HepG2 (cell line): ENCODE measurements at regions of chr10 and their contacts with region 1.

Region 1: DNA sequence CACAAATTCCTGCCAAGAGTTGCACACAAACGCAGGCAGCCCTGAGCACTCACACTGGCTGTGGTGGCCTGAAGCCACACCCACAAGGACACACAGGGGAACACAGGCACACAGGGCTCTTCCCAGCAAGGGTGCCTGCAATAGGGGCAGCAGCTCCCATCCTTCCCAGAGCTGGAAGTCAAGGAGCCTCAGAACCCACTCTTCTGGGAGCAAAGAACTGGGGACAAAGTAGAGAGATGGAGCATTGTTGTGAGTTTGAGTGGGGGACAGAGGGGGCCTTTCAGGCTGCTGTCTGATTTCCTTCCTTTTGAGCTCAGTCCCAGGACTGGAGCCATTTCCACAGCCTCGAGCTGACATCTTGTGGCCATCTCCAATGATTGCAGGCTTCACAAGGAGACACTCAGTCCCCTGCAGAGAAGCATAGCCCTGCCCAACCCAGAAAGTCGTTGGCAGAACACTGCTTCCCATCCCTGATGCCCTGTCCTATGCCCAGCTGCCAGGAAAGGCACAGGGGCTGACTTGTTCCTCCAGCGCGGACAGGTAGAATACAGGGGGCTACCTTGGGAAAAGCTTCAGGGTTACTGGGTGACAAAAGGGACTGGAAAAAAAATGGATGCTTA is 34.4 kb upstream of the SLF2 start:
- DNase-seq: peak; percentile 80
- ATAC-seq: peak; percentile 78
- H3K4me3 ChIP-seq: peak overlapping the region in 1 of 3 experiments; percentile 29; a peak in 2 of 6 replicates
- H3K27ac ChIP-seq: no peak overlapping the region
- H3K4me1 ChIP-seq: peaks cover 100% of the 10 kb centered on the region
- H3K27me3 ChIP-seq: no peaks in the 10 kb centered on the region
- CTCF ChIP-seq: peak; percentile 96
- EP300 ChIP-seq: no peak
- POLR2A ChIP-seq: no peak
- RAD21 ChIP-seq: peak; percentile 92

Region 2: DNA sequence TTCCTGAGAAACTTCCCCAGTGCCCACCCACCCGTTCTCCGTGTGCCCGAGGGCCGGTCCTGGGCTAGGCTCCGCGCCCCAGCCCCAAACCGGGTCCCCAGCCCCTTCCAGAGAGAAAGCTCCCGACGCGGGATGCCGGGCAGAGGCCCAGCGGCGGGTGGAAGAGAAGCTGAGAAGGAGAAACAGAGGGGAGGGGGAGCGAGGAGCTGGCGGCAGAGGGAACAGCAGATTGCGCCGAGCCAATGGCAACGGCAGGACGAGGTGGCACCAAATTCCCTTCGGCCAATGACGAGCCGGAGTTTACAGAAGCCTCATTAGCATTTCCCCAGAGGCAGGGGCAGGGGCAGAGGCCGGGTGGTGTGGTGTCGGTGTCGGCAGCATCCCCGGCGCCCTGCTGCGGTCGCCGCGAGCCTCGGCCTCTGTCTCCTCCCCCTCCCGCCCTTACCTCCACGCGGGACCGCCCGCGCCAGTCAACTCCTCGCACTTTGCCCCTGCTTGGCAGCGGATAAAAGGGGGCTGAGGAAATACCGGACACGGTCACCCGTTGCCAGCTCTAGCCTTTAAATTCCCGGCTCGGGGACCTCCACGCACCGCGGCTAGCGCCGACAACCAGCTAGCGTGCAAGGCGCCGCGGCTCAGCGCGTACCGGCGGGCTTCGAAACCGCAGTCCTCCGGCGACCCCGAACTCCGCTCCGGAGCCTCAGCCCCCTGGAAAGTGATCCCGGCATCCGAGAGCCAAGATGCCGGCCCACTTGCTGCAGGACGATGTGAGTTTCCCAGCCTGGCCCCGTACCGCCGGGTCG is 531.4 kb before region 1 on chr10 and contains the start of gene SCD:
- CTCF ChIA-PET with region 1: no interaction called
- POLR2A ChIA-PET with region 1: interaction called, 3 read pairs
- in situ Hi-C with region 1: loop called (anchors 25 kb)
- intact Hi-C with region 1: no loop called
- DNase-seq: peak; percentile 92
- ATAC-seq: peak; percentile 86
- H3K4me3 ChIP-seq: peak within 1 kb of the TSS; percentile 95 to 99 (median 95)
- H3K27ac ChIP-seq: peak within 1 kb of the TSS; percentile 82
- H3K4me1 ChIP-seq: peaks cover 63% of the 10 kb centered on the region
- H3K27me3 ChIP-seq: no peaks in the 10 kb centered on the region; a peak in 1 of 5 replicates
- CTCF ChIP-seq: peak; percentile 18; the same call in 1 of the 2 replicates
- EP300 ChIP-seq: peak in 1 of 2 experiments; percentile 38; a peak in 1 of 4 replicates
- POLR2A ChIP-seq: peak; percentile 91 to 92
- RAD21 ChIP-seq: no peak; the same call in 1 of the 2 replicates
- total RNA-seq, gene SCD: 338 and 492 TPM in 2 replicates

Region 3: DNA sequence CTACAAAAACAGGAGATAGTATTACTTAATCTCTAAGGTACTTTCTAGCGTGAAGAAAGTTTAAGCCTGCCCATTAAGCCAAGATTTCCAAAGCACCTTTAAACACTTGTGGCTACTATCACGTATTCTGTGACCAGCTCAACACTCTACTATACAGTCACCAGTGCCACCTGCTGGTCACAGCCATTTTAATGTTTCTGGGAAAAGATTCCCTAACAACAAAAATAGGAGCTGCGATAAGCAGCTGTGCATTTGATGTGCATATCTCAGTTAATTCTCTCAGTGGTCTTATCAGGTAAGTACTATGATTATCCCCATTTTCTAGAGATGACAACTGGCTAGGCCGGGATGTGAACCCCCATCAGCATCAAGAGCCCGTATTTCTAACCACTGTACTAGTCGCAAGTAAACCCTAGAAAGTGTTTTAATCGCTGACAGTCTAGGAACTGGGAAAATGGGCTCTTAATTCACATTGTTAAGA is 359.6 kb before region 1 on chr10:
- CTCF ChIA-PET with region 1: no interaction called
- POLR2A ChIA-PET with region 1: interaction called, 4 read pairs
- in situ Hi-C with region 1: no loop called
- intact Hi-C with region 1: loop called (anchors 2 kb)
- DNase-seq: peak; percentile 65
- ATAC-seq: peak; percentile 76
- H3K4me3 ChIP-seq: peak overlapping the region; percentile 41 to 78 (median 60); a peak in 5 of 6 replicates
- H3K27ac ChIP-seq: no peak overlapping the region
- H3K4me1 ChIP-seq: peaks cover 14% of the 10 kb centered on the region
- H3K27me3 ChIP-seq: no peaks in the 10 kb centered on the region
- CTCF ChIP-seq: peak; percentile 77
- EP300 ChIP-seq: no peak
- POLR2A ChIP-seq: no peak
- RAD21 ChIP-seq: no peak

Region 4: DNA sequence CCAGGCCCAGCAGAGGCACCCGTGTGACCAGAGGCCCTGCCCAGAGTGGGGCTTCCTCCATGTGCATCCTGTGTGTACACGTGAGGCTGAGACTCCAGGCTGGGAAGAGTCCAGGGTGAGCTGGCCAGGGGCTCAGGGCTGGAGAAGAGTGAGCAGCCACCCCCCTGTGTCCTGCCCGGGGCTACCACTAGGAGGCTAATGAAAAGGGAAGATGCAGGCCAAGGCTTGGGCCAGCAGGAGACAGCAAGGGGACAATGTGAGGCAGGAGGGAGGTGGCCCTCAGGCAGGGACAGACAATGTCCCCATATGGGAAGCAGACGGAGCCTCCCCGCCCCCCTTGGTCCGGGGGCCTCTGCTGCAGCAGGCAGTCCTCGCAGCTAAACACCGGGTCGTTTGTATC is 240.6 kb before region 1 on chr10:
- CTCF ChIA-PET with region 1: no interaction called
- POLR2A ChIA-PET with region 1: no interaction called
- in situ Hi-C with region 1: no loop called
- intact Hi-C with region 1: loop called (anchors 1 kb)
- DNase-seq: peak; percentile 35
- ATAC-seq: peak; percentile 98
- H3K4me3 ChIP-seq: no peak overlapping the region
- H3K27ac ChIP-seq: no peak overlapping the region
- H3K4me1 ChIP-seq: no peaks in the 10 kb centered on the region
- H3K27me3 ChIP-seq: peaks cover 2 to 31% of the 10 kb centered on the region in 2 experiments; a peak in 3 of 5 replicates
- CTCF ChIP-seq: peak; percentile 58
- EP300 ChIP-seq: no peak
- POLR2A ChIP-seq: no peak
- RAD21 ChIP-seq: peak; percentile 35; the same call in 1 of the 2 replicates

Region 5: GRCh38 chr10:100743626-100744135 is 134.7 kb before region 1 on chr10:
- CTCF ChIA-PET with region 1: no interaction called
- POLR2A ChIA-PET with region 1: no interaction called
- in situ Hi-C with region 1: no loop called
- intact Hi-C with region 1: loop called (anchors 5 kb)
- DNase-seq: peak; percentile 47
- ATAC-seq: peak; percentile 20; the same call in 2 of the 3 replicates
- H3K4me3 ChIP-seq: no peak overlapping the region
- H3K27ac ChIP-seq: no peak overlapping the region
- H3K4me1 ChIP-seq: peaks cover 21% of the 10 kb centered on the region
- H3K27me3 ChIP-seq: peaks cover 37 to 93% of the 10 kb centered on the region in 2 experiments
- CTCF ChIP-seq: peak; percentile 85
- EP300 ChIP-seq: no peak
- POLR2A ChIP-seq: no peak
- RAD21 ChIP-seq: peak; percentile 59; the same call in 1 of the 2 replicates

Region 6: DNA sequence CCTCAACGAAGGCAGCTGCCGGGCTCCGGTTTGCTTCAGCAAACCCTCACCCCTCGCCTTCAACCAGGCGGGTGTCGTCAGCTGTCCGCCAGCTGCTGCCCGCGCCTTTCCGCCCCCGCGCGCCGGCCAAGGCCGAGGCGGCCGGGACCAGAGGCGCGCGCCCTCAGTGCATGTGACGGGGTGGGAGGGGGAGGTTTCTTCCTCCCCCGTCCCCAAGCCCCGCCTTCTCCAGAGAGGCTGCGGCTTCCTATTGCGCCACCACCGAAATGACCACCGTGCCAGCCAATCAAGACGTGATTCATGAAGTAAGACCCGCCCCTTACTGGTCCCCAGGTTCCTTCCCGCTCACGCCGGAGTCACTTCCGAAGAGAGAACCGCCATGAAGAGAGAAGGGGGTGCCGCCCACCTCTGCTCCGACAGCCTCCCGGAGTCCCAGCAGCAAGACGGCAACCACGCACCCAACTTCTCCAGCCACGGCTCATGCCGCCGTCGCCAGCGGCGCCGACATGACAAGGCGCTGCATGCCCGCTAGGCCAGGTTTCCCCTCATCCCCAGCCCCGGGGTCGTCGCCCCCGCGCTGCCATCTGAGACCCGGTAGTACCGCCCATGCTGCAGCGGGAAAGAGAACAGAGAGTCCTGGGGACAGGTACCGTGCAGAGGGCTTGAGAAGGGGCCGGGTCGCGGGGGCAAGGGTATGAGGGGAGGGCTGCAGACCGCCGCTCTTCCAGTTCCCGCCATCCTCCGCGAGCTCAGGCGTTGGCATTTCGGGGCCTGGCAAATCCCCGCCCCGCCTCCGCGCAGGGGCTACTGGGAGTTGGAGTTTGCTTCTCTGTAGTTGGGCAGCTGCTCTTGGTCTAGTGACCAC is 34.4 kb after region 1 on chr10 and contains the start of gene SLF2:
- CTCF ChIA-PET with region 1: no interaction called
- POLR2A ChIA-PET with region 1: interaction called, 34 read pairs
- in situ Hi-C with region 1: no loop called
- intact Hi-C with region 1: no loop called
- DNase-seq: peak; percentile 97
- ATAC-seq: peak; percentile 94
- H3K4me3 ChIP-seq: peak within 1 kb of the TSS; percentile 77 to 96 (median 92)
- H3K27ac ChIP-seq: peak within 1 kb of the TSS; percentile 85
- H3K4me1 ChIP-seq: peaks cover 67% of the 10 kb centered on the region
- H3K27me3 ChIP-seq: no peaks in the 10 kb centered on the region
- CTCF ChIP-seq: no peak; the same call in 1 of the 2 replicates
- EP300 ChIP-seq: no peak; a peak in 1 of 4 replicates
- POLR2A ChIP-seq: peak; percentile 63 to 74
- RAD21 ChIP-seq: peak; percentile 30; the same call in 1 of the 2 replicates
- total RNA-seq, gene SLF2: 48.1 and 59.8 TPM in 2 replicates

Region 7: DNA sequence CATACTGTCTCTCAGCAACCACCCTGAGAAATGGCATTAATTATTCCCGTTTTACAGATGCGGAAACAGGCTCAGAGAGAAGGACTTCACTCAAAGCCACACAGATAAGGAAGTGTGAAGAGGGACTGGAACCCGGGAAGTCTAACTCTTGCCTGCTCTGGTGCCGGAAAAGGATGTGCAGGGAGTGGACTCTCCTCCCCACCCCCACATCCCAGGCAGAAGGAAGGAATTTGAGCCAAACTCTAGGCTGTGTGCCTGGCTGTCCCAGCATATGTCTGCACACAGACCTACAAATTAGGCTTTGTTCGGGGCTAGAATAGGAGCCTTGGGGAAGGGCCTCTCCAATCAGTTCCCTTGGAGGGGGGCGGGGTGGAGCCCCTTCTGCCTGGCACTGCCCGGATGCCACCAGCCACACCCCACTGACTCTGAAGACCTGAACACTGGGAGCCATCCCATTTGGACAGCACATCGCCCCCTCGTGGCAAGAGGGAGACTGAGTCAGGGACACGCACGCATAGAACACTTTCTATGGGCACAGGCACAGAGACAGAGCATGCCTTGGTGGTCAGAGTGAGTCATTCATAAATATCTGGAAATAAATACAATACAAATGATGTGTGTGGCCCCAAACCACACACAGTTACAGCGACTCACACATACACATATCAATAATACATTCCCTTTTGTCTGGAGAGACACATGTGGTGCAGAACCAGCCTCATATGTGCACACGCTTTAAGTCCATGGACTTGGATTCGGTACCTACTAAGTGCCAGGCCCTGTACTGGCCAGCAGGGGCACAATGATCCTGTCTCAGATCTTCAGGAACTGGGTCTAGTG is 134.3 kb after region 1 on chr10:
- CTCF ChIA-PET with region 1: no interaction called
- POLR2A ChIA-PET with region 1: interaction called, 5 read pairs
- in situ Hi-C with region 1: no loop called
- intact Hi-C with region 1: loop called (anchors 5 kb)
- DNase-seq: peak; percentile 89
- ATAC-seq: peak; percentile 73
- H3K4me3 ChIP-seq: peak overlapping the region in 1 of 3 experiments; percentile 77; a peak in 2 of 6 replicates
- H3K27ac ChIP-seq: no peak overlapping the region
- H3K4me1 ChIP-seq: peaks cover 75% of the 10 kb centered on the region
- H3K27me3 ChIP-seq: no peaks in the 10 kb centered on the region
- CTCF ChIP-seq: peak; percentile 93
- EP300 ChIP-seq: no peak; a peak in 1 of 4 replicates
- POLR2A ChIP-seq: no peak
- RAD21 ChIP-seq: peak; percentile 77